ENCODE measurements at regions of chr7 and their contacts with region 1.

Region 1: GRCh38 chr7:30740424-30741181 is 11.3 kb upstream of the INMT start:
- DNase-seq: peak; percentile 87
- ATAC-seq: peak; percentile 56
- H3K4me3 Mint-ChIP-seq: no peak overlapping the region
- H3K27ac Mint-ChIP-seq: no peak overlapping the region
- H3K4me1 Mint-ChIP-seq: peaks cover 43% of the 10 kb centered on the region
- H3K27me3 Mint-ChIP-seq: no peaks in the 10 kb centered on the region

Region 2: DNA sequence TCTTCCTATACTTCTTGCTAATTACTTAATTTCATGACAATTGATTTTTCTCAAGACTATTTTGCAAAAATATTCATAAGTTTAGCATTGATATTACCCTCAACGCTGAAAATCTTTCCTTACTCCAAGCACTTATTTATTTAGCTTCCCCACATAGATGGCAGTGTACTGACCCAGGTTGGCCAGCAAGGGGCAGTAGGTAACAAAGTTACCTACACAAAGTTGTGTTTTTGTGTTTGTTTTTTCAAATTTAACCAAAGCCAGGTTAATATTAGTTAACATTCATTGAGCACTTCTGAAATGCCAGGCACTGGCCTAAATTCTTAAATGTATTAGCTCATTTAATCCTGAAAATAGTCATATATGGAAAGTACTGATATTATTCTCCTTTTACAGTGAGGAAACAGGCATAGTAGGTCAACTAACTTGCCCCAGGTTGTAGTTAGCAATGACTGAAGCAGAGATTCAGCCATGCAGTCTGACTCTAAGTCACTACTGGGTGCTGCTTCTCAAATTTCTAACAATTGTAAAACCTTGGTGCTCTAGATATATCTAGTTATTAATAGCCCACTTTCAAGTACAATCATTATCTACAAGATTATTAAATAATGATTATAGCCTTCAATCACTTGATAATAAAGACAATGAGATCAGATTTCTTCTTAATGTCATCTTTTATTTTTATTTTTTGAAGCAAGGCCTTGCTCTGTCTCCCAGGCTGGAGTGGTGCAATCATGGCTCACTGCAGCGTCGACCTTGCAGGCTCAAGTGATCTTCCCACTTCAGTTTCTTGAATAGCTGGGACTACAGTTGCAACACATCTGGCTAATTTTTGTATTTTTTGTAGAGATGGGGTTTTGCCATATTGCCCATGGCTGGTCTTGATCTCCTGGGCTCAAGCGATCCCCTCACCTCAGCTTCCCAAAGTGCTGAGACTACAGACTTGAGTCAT is 230.2 kb before region 1 on chr7:
- CTCF ChIA-PET with region 1: interaction called, 4 read pairs
- POLR2A ChIA-PET with region 1: no interaction called
- intact Hi-C with region 1: loop called in 1 of 2 experiments (anchors 1 kb)
- DNase-seq: peak; percentile 59
- ATAC-seq: peak; percentile 59
- H3K4me3 Mint-ChIP-seq: no peak overlapping the region
- H3K27ac Mint-ChIP-seq: no peak overlapping the region
- H3K4me1 Mint-ChIP-seq: peaks cover 6% of the 10 kb centered on the region
- H3K27me3 Mint-ChIP-seq: no peaks in the 10 kb centered on the region

Region 3: DNA sequence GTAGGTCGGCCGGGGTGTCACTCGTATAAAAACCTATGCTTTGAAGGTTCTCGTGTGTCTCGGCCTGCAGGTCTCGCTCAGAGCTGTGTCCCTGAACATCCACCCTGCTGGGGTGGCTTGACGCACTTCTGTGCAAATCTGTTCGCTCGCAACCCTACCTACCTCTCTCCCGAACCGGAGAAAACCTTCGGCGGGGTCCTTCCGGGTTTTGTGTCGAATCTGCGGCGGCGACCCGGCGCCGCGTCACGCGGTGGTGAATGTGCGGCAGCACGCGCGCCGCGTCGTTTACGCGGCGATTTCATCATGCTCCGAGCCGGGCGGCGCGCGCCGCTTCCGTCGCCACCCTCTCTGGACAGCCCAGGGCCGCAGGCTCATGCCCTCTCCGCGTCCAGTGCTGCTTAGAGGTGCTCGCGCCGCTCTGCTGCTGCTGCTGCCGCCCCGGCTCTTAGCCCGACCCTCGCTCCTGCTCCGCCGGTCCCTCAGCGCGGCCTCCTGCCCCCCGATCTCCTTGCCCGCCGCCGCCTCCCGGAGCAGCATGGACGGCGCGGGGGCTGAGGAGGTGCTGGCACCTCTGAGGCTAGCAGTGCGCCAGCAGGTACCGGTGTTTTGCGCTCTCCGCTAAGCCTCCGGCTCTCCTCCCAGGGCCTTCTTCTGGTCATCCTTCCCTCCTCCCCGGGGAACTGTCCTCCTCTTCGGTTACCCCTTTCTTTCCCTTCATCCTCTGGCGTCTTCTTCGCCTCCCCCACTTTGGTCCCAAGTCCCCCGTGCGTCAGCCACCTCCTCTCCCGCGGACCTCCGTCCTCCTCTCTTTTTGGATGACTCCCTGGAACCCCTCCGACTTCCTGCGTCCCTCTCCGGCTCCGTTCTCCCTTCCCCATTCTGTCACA is 145.8 kb before region 1 on chr7 and contains the start of gene GARS1:
- CTCF ChIA-PET with region 1: interaction called, 3 read pairs
- POLR2A ChIA-PET with region 1: no interaction called
- intact Hi-C with region 1: loop called in 1 of 2 experiments (anchors 5 kb)
- DNase-seq: peak; percentile 94
- ATAC-seq: peak; percentile 84
- H3K4me3 Mint-ChIP-seq: peak within 1 kb of the TSS; percentile 100
- H3K27ac Mint-ChIP-seq: peak within 1 kb of the TSS; percentile 100
- H3K4me1 Mint-ChIP-seq: peaks cover 51% of the 10 kb centered on the region
- H3K27me3 Mint-ChIP-seq: no peaks in the 10 kb centered on the region
- total RNA-seq, gene GARS1: 391 to 439 TPM

Region 4: DNA sequence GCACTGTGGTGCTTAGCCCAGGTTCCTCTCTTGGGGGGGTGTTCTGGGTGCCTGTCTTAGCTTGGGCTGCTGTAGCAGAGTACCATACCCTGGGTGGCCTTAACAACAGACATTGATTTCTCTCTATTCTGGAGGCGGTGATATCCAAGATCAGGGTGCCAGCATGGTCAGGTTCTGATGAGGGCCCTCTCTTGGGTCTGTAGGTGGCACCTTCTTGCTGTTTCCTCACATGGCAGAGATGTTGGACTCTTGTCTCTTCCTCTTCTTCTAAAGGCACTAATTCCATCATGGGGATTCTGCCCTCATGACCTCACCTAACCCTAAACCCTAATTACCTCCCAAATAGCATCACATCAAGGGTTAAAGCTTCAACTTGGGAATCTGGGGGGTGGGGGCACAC is 38.4 kb before region 1 on chr7:
- CTCF ChIA-PET with region 1: interaction called, 38 read pairs
- POLR2A ChIA-PET with region 1: no interaction called
- intact Hi-C with region 1: loop called (anchors 1 kb)
- DNase-seq: peak; percentile 55
- ATAC-seq: peak; percentile 61
- H3K4me3 Mint-ChIP-seq: no peak overlapping the region
- H3K27ac Mint-ChIP-seq: no peak overlapping the region
- H3K4me1 Mint-ChIP-seq: peaks cover 3% of the 10 kb centered on the region
- H3K27me3 Mint-ChIP-seq: no peaks in the 10 kb centered on the region

Region 5: DNA sequence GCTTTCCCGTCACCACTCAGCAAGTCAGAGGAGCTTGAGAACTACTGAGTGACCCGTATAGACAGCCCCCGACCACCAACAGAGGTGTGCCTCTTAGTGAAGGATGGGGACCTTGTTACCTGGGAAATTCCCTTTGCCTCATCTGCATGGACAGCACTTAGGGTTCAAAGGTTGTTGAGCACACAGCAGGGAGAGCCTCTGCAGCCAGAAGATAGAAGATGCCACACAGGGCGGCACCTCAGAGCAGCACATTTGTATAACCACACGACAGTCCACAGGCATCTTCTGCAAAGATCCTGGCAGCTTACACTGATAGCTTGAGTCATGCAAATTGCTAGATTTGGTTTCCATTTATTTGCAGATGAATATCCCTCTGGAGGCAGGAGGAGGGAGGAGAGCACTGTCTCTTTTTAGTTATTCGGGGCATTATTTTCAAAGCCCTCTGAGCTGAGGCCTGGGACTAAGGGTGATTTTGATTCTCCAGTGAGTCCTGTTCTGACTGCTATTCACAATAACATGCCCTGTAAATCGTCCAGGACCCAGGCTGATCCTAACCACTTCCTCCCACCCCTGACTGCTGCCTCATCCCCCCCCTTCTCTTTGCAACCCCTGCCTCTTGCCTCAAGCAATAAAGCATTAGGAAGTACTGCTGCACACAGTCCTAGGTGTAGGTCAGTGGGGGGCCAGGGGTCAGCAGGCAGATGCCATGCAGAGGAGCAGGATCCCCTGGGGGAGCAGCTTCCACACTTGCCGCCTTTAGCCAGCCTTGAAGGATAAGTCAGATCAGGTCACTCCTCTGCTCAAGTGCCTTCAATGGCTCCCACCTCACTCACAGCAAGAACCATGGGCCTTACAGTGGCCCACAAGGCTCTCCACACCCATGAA is 13.3 kb before region 1 on chr7:
- CTCF ChIA-PET with region 1: interaction called, 39 read pairs
- POLR2A ChIA-PET with region 1: no interaction called
- intact Hi-C with region 1: no loop called
- DNase-seq: peak; percentile 69
- ATAC-seq: peak; percentile 89
- H3K4me3 Mint-ChIP-seq: peak overlapping the region; percentile 68
- H3K27ac Mint-ChIP-seq: peak overlapping the region; percentile 92
- H3K4me1 Mint-ChIP-seq: peaks cover 60% of the 10 kb centered on the region
- H3K27me3 Mint-ChIP-seq: no peaks in the 10 kb centered on the region

Measured in activated CD4-positive, alpha-beta T cell treated with anti-CD3 and anti-CD28 coated beads for 36 hours (primary cell).